ENCODE measurements at regions of chr9 and their contacts with region 1.

Region 1: DNA sequence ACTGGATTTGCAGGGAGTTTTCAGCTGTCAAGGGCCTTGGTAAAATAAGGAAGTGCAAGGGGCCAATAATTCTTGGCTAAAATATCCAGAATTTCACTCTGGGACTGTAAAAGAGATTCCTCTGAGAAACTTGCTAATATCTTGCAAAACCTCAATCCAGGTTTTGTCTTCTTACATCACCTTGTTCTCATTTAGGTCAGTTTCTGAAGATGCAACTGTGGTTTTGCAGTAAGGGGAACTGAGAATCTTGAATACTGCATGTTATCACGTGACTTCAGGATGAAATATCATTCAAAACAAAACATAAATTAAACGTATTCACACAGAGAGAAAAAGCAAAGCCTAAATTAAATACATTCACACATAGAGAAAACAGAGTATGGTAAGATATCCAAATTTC is 35.0 kb upstream of the RIC1 start:
- DNase-seq: no peak
- ATAC-seq: no peak
- H3K4me3 ChIP-seq: no peak overlapping the region
- H3K27ac ChIP-seq: no peak overlapping the region
- H3K4me1 ChIP-seq: no peaks in the 10 kb centered on the region
- H3K27me3 ChIP-seq: no peaks in the 10 kb centered on the region
- CTCF ChIP-seq: no peak
- POLR2A ChIP-seq: no peak
- RAD21 ChIP-seq: no peak

Region 2: GRCh38 chr9:4750023-4750673 is 843.8 kb before region 1 on chr9:
- CTCF ChIA-PET with region 1: no interaction called
- POLR2A ChIA-PET with region 1: no interaction called
- dilution Hi-C with region 1: no loop called
- in situ Hi-C with region 1: loop called (anchors 5 kb)
- intact Hi-C with region 1: loop called (anchors 5 kb)
- DNase-seq: peak; percentile 61
- ATAC-seq: peak; percentile 90
- H3K4me3 ChIP-seq: no peak overlapping the region
- H3K27ac ChIP-seq: no peak overlapping the region
- H3K4me1 ChIP-seq: no peaks in the 10 kb centered on the region
- H3K27me3 ChIP-seq: no peaks in the 10 kb centered on the region
- CTCF ChIP-seq: peak; percentile 68
- POLR2A ChIP-seq: no peak
- RAD21 ChIP-seq: peak; percentile 58

Region 3: GRCh38 chr9:5186416-5187169 is 407.3 kb before region 1 on chr9:
- CTCF ChIA-PET with region 1: interaction called, 7 read pairs
- POLR2A ChIA-PET with region 1: no interaction called
- dilution Hi-C with region 1: no loop called
- in situ Hi-C with region 1: loop called (anchors 5 kb)
- intact Hi-C with region 1: loop called (anchors 2 kb)
- DNase-seq: peak; percentile 73
- ATAC-seq: peak; percentile 83
- H3K4me3 ChIP-seq: no peak overlapping the region
- H3K27ac ChIP-seq: no peak overlapping the region
- H3K4me1 ChIP-seq: no peaks in the 10 kb centered on the region
- H3K27me3 ChIP-seq: peaks cover 8% of the 10 kb centered on the region
- CTCF ChIP-seq: peak; percentile 82
- POLR2A ChIP-seq: no peak
- RAD21 ChIP-seq: peak; percentile 93

Region 4: DNA sequence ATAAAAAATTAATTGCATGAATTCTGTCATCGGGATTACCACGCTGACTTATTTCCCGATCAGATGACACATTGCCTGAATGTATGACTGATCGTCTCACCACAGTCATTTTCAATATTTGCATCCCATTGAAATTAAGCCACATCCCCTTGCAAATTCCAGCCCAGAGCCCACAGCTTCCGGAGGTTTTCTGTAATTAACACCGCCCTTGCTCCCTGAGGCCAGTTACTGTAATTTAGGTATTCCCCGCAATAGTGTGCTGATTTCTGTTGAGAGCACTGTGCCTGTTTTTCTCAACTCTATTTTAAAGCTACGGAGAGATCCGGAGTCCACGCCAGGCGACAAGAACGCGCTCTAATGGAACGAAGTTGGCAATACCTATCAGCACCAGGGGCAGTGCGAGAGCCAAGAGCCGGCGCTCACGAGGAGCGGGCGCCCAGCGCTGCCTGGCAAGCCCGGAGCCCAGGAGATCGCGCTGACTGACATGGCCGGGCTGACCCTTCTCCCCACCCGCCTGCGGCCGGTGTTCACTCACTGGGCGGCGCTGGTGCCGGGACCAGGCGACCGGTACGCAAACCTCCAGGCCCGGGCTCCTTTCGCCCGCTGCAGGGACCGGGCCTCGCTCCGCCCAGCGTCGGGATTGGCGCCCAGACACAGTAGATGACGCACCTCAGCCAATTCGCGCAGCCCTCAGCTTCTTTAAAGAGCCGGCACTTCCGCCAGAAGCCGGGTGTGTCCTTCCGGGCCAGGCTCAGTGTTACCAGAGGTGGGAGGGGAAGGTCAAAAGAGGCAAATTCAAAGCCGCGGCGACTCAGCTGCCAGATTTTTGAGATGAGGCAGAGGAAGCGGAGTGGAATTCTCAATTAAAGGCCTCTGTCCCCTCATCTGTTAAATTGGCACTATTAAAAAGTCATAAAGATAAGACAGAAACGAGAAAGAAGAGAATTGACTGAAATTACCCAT is 156.4 kb before region 1 on chr9 and contains the start of gene PLGRKT:
- CTCF ChIA-PET with region 1: interaction called, 5 read pairs
- POLR2A ChIA-PET with region 1: no interaction called
- dilution Hi-C with region 1: no loop called
- in situ Hi-C with region 1: no loop called
- intact Hi-C with region 1: loop called (anchors 5 kb)
- DNase-seq: peak; percentile 87
- ATAC-seq: peak; percentile 98
- H3K4me3 ChIP-seq: peak within 1 kb of the TSS; percentile 75
- H3K27ac ChIP-seq: peak within 1 kb of the TSS; percentile 70
- H3K4me1 ChIP-seq: peaks cover 5% of the 10 kb centered on the region
- H3K27me3 ChIP-seq: no peaks in the 10 kb centered on the region
- CTCF ChIP-seq: peak; percentile 29; the same call in 1 of the 2 replicates
- POLR2A ChIP-seq: peak; percentile 81
- RAD21 ChIP-seq: peak; percentile 27
- total RNA-seq, gene PLGRKT: 12.7 and 13.6 TPM in 2 replicates